ENCODE measurements at regions of chr13 and their contacts with region 1.

Region 1: DNA sequence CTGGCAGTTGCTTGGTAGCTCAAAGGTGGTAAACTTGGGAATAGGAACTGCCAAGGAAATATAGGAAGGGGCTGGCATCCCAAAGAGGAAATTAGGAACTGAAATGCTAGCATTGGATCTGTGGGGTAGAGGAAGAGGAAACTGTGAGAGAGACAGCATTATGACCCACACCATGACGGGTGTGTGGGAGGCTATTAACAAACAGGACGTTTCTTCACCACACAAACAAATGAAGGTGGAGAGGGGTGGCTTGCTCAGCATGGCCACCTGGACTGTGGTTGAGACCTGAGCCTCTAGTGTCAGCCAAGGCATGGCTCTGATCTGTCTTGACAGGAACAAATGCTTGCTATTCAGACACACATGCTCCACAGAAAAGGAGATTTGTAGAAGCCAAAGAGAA is 178.2 kb downstream of the B3GLCT start:
- DNase-seq: peak; percentile 79
- H3K4me3 ChIP-seq: no peak overlapping the region
- H3K27ac ChIP-seq: peak overlapping the region; percentile 21
- H3K4me1 ChIP-seq: peaks cover 20% of the 10 kb centered on the region
- CTCF ChIP-seq: no peak

Region 2: DNA sequence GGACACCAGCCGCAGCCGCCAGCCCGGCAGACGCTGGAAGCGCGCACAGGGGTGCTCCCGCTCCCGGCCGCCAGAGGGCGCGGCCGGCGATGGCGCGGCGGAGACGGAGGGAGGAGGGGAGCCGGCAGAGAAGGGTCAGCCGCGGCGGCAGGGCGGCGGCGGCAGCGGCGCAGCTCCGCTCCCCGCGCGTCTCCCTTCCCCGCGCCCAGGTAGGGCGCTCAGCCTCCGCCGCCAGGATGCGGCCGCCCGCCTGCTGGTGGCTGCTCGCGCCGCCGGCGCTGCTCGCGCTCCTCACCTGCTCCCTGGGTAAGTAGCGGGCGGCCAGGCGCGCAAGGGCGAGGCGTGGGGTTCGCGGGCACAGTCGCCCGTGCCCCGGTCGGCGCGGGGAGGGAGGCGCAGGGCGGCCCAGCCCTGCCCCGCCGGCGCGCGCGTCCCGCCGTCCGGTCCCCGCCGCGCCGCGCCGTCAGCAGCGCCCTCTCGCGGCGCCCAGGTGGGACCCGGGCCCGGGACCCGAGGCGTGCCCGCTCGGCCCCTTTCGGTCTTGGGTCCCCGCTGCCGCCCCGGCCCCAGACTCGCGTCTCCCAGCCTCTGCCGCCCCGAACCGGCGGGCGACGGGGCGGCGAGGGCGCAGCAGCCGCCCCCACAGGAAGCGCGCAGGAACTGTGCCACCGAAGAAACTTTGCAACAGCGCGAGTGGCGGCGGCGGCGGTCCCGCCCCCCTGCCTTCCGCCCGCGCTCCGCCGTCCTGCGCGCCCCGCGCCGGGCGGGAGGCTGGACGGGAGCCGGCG is 177.9 kb before region 1 on chr13 and contains the start of gene B3GLCT:
- CTCF ChIA-PET with region 1: no interaction called
- POLR2A ChIA-PET with region 1: no interaction called
- intact Hi-C with region 1: no loop called
- DNase-seq: peak; percentile 88
- H3K4me3 ChIP-seq: peak within 1 kb of the TSS; percentile 89
- H3K27ac ChIP-seq: peak within 1 kb of the TSS; percentile 74
- H3K4me1 ChIP-seq: peaks cover 16% of the 10 kb centered on the region
- CTCF ChIP-seq: peak; percentile 78
- total RNA-seq, gene B3GLCT: 3.6 and 3.7 TPM in 2 replicates

Region 3: GRCh38 chr13:31441800-31442506 is 64.0 kb after region 1 on chr13:
- CTCF ChIA-PET with region 1: no interaction called
- POLR2A ChIA-PET with region 1: no interaction called
- intact Hi-C with region 1: no loop called
- DNase-seq: no peak
- H3K4me3 ChIP-seq: no peak overlapping the region
- H3K27ac ChIP-seq: no peak overlapping the region
- H3K4me1 ChIP-seq: no peaks in the 10 kb centered on the region
- CTCF ChIP-seq: no peak

Region 4: DNA sequence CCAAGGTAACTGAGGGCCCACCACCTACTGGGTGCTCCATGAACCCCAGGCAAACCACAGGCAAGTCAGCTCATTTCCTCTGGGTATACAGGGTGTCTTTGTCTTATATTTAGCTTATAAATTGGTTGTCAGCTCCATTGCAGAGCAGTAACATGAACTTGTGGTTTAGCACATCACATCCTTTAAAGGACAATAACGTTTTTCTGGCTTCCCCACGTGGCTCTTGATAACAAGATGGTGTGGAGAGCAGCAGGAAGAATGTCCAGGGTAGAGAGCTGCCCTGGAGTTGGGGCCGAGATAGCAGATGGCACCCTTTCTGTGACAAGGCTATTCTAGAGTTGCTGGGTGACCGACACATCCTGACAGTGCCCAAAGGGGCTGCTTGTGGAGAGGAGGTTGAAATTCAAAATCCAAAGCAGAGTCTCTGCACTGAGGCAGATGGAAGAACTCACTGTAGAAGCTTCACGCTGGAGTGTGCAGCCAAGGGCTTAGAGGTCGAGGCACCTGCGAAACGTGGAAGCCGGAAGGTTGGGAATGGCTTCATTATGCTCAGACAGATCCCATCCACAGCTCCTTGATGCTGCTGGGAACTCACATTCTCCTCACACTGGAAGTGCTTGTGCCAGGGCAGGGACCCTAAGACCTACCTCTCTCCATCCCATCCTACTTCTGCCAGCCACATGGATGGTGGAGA is 520.6 kb after region 1 on chr13:
- CTCF ChIA-PET with region 1: no interaction called
- POLR2A ChIA-PET with region 1: no interaction called
- intact Hi-C with region 1: no loop called
- DNase-seq: no peak
- H3K4me3 ChIP-seq: no peak overlapping the region
- H3K27ac ChIP-seq: no peak overlapping the region
- H3K4me1 ChIP-seq: no peaks in the 10 kb centered on the region
- CTCF ChIP-seq: no peak

Region 5: DNA sequence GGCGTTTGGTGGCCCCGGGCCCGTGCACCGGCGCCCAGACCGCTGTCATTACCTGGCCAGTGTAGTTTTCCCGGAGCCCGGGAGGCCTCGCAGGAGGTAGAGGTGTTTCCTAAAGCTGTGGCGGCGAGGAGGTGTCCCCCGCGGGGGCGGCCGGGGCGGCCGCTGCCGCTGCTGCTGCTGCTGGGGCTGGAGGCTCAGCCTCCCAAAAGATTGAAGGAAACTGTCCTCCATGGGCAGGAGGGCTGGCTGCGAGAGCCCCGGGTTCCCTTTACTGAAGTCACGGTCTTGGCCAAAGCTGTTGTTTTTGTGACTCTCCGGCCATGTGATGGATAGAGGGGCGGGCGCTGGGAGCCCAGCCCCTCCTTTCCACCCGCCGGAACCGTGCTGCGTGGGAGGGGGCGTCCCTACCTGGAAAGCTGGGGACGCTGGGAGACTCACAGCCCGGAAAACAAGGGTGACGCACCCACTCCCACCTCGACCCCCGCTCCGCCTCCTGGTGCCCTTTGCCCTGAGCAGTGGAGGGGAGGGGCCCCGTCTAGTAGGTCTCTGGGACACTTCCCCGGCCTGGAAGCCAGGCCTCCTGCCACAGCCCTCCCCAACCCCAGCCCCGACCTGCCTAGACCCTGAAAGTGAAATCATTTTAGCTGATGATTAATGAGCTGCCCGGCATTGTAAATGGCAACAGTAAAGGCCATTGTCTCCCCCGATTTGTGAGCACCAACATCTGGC is 1050.1 kb after region 1 on chr13 and contains the start of gene N4BP2L1:
- CTCF ChIA-PET with region 1: no interaction called
- POLR2A ChIA-PET with region 1: no interaction called
- intact Hi-C with region 1: loop called (anchors 5 kb)
- DNase-seq: peak; percentile 66
- H3K4me3 ChIP-seq: peak within 1 kb of the TSS; percentile 96
- H3K27ac ChIP-seq: peak within 1 kb of the TSS; percentile 60
- H3K4me1 ChIP-seq: peaks cover 25% of the 10 kb centered on the region
- CTCF ChIP-seq: no peak
- total RNA-seq, gene N4BP2L1: 12.8 and 14.6 TPM in 2 replicates